T-cell (primary cell): ENCODE measurements at regions of chr7 and their contacts with region 1.

Region 1: GRCh38 chr7:142478479-142479072 is 220.7 kb upstream of the PRSS58 start:
- DNase-seq: peak in 1 of 35 experiments; percentile 69
- ATAC-seq: peak in 1 of 4 experiments; percentile 26
- H3K4me3 ChIP-seq: no peak overlapping the region
- H3K4me3 Mint-ChIP-seq: peak overlapping the region in 2 of 3 donors; percentile 2 to 71
- H3K27ac ChIP-seq: peak overlapping the region; percentile 64
- H3K27ac Mint-ChIP-seq: peak overlapping the region; percentile 96 to 97
- H3K4me1 ChIP-seq: peaks cover 36 to 66% of the 10 kb centered on the region in 2 experiments
- H3K4me1 Mint-ChIP-seq: peaks cover 79 to 86% (median 82%) of the 10 kb centered on the region in 3 donors
- H3K27me3 ChIP-seq: no peaks in the 10 kb centered on the region
- H3K27me3 Mint-ChIP-seq: no peaks in the 10 kb centered on the region

Region 2: DNA sequence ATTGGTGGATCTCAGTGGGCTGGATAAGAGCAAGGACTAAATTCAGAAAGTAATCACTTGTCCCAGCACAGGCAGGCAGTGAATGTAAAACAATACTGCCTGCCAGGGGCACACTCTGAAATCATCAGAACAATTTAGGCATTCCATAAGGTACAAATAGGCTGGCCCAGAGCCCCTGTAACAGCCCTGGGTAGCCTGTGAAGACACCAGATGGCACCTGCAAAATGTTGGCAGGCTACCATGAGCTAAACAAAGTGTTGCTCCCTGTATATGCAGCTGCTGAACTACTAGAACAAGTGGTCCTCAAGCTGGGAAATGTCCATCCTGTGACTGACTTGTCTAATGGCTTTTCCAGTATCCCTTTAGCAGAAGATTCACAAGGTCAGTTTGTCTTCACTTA is 634.3 kb before region 1 on chr7:
- CTCF ChIA-PET with region 1: no interaction called
- POLR2A ChIA-PET with region 1: no interaction called
- DNase-seq: no peak
- ATAC-seq: no peak
- H3K4me3 ChIP-seq: no peak overlapping the region
- H3K4me3 Mint-ChIP-seq: no peak overlapping the region
- H3K27ac ChIP-seq: no peak overlapping the region
- H3K27ac Mint-ChIP-seq: no peak overlapping the region
- H3K4me1 ChIP-seq: no peaks in the 10 kb centered on the region
- H3K4me1 Mint-ChIP-seq: no peaks in the 10 kb centered on the region
- H3K27me3 ChIP-seq: no peaks in the 10 kb centered on the region
- H3K27me3 Mint-ChIP-seq: no peaks in the 10 kb centered on the region

Region 3: DNA sequence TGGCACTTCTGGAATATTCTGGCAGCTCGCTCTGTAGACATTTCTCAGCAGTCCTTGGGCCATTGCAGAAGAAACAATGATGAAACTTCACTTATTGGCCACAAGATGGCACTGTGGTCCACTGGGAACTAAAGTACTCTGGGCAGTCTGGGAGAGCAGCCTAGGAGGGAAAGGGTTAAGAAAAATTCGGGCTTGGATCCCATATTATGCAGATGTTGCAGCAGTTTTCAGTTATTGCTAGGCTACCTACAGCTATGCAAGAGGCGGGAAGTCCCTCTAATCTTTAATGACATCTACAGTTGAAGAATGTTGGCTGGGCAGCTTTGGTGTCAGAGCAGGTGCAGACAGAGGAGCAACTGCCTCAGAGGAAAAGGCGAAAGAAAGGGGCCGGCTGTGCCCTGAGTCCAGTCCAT is 19.0 kb before region 1 on chr7:
- CTCF ChIA-PET with region 1: interaction called, 18 to 48 read pairs
- POLR2A ChIA-PET with region 1: interaction called in 1 of 2 experiments, 3 read pairs
- DNase-seq: peak in 5 of 35 experiments; percentile 11 to 73 (median 26)
- ATAC-seq: peak; percentile 22 to 48 (median 44)
- H3K4me3 ChIP-seq: no peak overlapping the region
- H3K4me3 Mint-ChIP-seq: peak overlapping the region; percentile 21 to 32 (median 26)
- H3K27ac ChIP-seq: no peak overlapping the region
- H3K27ac Mint-ChIP-seq: peak overlapping the region; percentile 39 to 66
- H3K4me1 ChIP-seq: peaks cover 16 to 47% of the 10 kb centered on the region in 2 experiments
- H3K4me1 Mint-ChIP-seq: peaks cover 62 to 80% (median 64%) of the 10 kb centered on the region in 3 donors
- H3K27me3 ChIP-seq: peaks cover 0 to 2% of the 10 kb centered on the region in 2 experiments
- H3K27me3 Mint-ChIP-seq: no peaks in the 10 kb centered on the region

Region 4: DNA sequence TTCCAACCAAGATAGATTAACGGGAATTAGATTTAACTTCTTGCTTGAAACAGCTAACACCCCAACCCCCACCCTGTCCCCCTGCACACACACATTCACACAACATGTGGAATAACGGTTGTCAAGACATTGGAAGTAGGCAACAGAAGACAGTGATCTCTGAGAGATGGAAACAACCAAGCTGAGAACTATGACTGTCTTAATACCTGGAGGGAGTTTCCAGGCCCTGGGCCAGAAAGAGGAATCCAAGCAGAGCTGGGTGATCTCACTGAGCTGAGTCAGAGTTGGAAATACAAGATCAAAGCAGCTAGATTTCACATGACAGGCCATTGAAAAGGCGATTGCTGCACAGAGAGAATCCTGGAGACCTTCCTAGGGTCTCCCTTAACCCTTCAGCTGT is 104.8 kb after region 1 on chr7:
- CTCF ChIA-PET with region 1: no interaction called
- POLR2A ChIA-PET with region 1: no interaction called
- DNase-seq: peak in 1 of 35 experiments; percentile 26
- ATAC-seq: peak in 1 of 4 experiments; percentile 39
- H3K4me3 ChIP-seq: no peak overlapping the region
- H3K4me3 Mint-ChIP-seq: no peak overlapping the region
- H3K27ac ChIP-seq: no peak overlapping the region
- H3K27ac Mint-ChIP-seq: no peak overlapping the region
- H3K4me1 ChIP-seq: peaks cover 4 to 10% of the 10 kb centered on the region in 2 experiments
- H3K4me1 Mint-ChIP-seq: peaks cover 22 to 34% (median 28%) of the 10 kb centered on the region in 3 donors
- H3K27me3 ChIP-seq: no peaks in the 10 kb centered on the region
- H3K27me3 Mint-ChIP-seq: no peaks in the 10 kb centered on the region

Region 5: GRCh38 chr7:142983825-142984224 is 505.2 kb after region 1 on chr7:
- CTCF ChIA-PET with region 1: no interaction called
- POLR2A ChIA-PET with region 1: no interaction called
- DNase-seq: no peak
- ATAC-seq: no peak
- H3K4me3 ChIP-seq: no peak overlapping the region
- H3K4me3 Mint-ChIP-seq: no peak overlapping the region
- H3K27ac ChIP-seq: no peak overlapping the region
- H3K27ac Mint-ChIP-seq: no peak overlapping the region
- H3K4me1 ChIP-seq: no peaks in the 10 kb centered on the region
- H3K4me1 Mint-ChIP-seq: no peaks in the 10 kb centered on the region
- H3K27me3 ChIP-seq: peaks cover 0 to 9% of the 10 kb centered on the region in 2 experiments
- H3K27me3 Mint-ChIP-seq: peaks cover 16 to 19% of the 10 kb centered on the region in 2 donors